PC-3 (cell line): ENCODE measurements at regions of chr1 and their contacts with region 1.

Region 1: GRCh38 chr1:243748706-243749283 is 101.2 kb downstream of the AKT3 start:
- DNase-seq: peak; percentile 90
- ATAC-seq: peak; percentile 100
- H3K4me3 ChIP-seq: no peak overlapping the region
- H3K27ac ChIP-seq: no peak overlapping the region
- H3K4me1 ChIP-seq: peaks cover 5% of the 10 kb centered on the region
- H3K27me3 ChIP-seq: no peaks in the 10 kb centered on the region
- CTCF ChIP-seq: peak; percentile 88

Region 2: GRCh38 chr1:243421784-243422183 is 327.0 kb before region 1 on chr1:
- CTCF ChIA-PET with region 1: no interaction called
- POLR2A ChIA-PET with region 1: no interaction called
- intact Hi-C with region 1: loop called (anchors 5 kb)
- DNase-seq: peak; percentile 93
- ATAC-seq: peak; percentile 100
- H3K4me3 ChIP-seq: peak overlapping the region; percentile 60
- H3K27ac ChIP-seq: peak overlapping the region; percentile 20
- H3K4me1 ChIP-seq: peaks cover 20% of the 10 kb centered on the region
- H3K27me3 ChIP-seq: no peaks in the 10 kb centered on the region
- CTCF ChIP-seq: no peak

Region 3: DNA sequence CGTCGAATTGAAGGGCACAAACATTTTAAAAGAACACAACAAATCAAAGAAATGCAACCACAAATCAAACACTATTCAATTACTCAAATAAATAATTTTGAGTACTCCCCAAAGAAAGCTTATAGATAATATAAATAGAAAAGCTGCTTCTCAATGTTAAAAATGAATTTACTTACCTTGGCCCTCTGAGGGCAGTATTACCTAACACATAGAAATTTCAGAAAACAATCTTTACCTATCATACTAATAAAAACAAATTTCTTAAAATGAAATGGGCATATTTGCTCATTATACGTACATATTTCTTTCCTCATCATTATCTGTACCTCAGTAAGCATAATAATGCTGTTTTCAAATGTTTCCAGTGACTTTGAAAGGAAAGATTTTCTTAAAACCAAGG is 40.6 kb before region 1 on chr1:
- CTCF ChIA-PET with region 1: no interaction called
- POLR2A ChIA-PET with region 1: no interaction called
- intact Hi-C with region 1: loop called (anchors 1 kb)
- DNase-seq: peak; percentile 50
- ATAC-seq: no peak
- H3K4me3 ChIP-seq: no peak overlapping the region
- H3K27ac ChIP-seq: no peak overlapping the region
- H3K4me1 ChIP-seq: peaks cover 15% of the 10 kb centered on the region
- H3K27me3 ChIP-seq: no peaks in the 10 kb centered on the region
- CTCF ChIP-seq: peak; percentile 86

Region 4: GRCh38 chr1:244224487-244225430 is 476.0 kb after region 1 on chr1:
- CTCF ChIA-PET with region 1: no interaction called
- POLR2A ChIA-PET with region 1: no interaction called
- intact Hi-C with region 1: no loop called
- DNase-seq: no peak
- ATAC-seq: no peak
- H3K4me3 ChIP-seq: no peak overlapping the region
- H3K27ac ChIP-seq: no peak overlapping the region
- H3K4me1 ChIP-seq: peaks cover 17% of the 10 kb centered on the region
- H3K27me3 ChIP-seq: no peaks in the 10 kb centered on the region
- CTCF ChIP-seq: no peak